Naive thymus-derived CD4-positive, alpha-beta T cell (primary cell): ENCODE measurements at regions of chr20 and their contacts with region 1.

Region 1: DNA sequence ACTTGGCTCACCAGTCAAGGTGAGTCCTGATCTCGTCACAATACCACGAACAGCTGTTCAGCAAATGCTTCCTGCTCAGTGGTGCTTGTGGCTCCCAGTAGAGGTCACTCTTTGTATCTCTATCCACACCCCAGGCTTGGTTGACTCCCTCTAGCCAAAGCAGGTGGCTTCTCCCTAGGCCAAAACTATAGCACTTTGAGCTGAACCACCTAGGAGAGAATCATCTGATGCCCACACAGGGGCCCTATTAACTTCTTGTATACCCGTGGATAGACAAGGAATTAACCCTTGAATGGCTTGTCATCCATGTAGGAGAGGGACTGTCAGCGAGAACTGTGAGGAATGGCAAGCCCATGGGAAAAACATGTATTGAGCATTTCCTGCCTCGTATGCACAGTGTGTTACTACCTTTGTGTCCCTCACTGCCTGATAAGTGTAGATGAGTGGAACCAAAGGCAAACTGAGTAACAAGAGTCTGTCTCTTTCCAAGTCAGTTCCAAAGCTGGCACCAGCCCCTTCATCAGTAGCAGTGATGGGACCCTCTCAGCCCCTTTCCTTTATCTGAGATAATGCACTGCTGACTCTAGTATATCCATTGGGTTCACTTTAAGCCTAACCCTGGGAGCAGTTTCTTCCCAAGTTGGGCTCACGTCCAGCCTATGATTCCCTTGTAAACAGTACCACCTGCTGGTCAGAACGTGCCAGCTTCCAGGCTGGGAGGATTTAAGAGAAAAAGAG is 42.5 kb downstream of the EIF2S2 start:
- DNase-seq: peak in 8 of 9 donors; percentile 30 to 64 (median 53)
- ATAC-seq: peak; percentile 90
- H3K4me3 ChIP-seq: no peak overlapping the region
- H3K4me3 Mint-ChIP-seq: no peak overlapping the region
- H3K27ac ChIP-seq: peak overlapping the region; percentile 22
- H3K27ac Mint-ChIP-seq: peak overlapping the region in 7 of 9 donors; percentile 10 to 81 (median 41)
- H3K4me1 ChIP-seq: peaks cover 5 to 12% of the 10 kb centered on the region in 2 donors
- H3K4me1 Mint-ChIP-seq: peaks cover 29 to 51% (median 38%) of the 10 kb centered on the region in 7 donors
- H3K27me3 ChIP-seq: no peaks in the 10 kb centered on the region
- H3K27me3 Mint-ChIP-seq: no peaks in the 10 kb centered on the region

Region 2: DNA sequence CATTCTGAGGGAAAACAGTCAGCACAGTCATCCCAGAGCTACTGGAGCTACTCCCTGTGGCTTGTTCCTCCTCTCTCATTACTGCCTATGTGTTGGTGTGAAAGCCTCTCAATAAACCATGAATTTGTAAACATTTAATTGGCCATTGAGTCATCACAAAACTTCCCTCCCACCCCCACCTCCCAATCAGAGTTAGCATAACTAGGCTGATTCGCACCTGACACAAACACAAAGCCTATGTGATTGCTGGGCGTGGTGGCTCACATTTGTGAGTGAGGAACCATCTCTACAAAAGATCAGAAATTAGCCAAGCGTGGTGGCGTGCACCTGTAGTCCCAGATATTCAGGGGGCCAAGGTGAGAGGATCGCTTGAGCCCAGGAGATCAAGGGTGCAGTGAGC is 608.8 kb before region 1 on chr20:
- CTCF ChIA-PET with region 1: no interaction called
- POLR2A ChIA-PET with region 1: no interaction called
- intact Hi-C with region 1: loop called in 1 of 2 experiments (anchors 1 kb)
- DNase-seq: no peak
- ATAC-seq: no peak
- H3K4me3 ChIP-seq: no peak overlapping the region
- H3K4me3 Mint-ChIP-seq: no peak overlapping the region
- H3K27ac ChIP-seq: no peak overlapping the region
- H3K27ac Mint-ChIP-seq: no peak overlapping the region
- H3K4me1 ChIP-seq: no peaks in the 10 kb centered on the region
- H3K4me1 Mint-ChIP-seq: peaks cover 0 to 4% (median 0%) of the 10 kb centered on the region in 7 donors
- H3K27me3 ChIP-seq: no peaks in the 10 kb centered on the region
- H3K27me3 Mint-ChIP-seq: no peaks in the 10 kb centered on the region

Region 3: GRCh38 chr20:33785503-33785902 is 284.0 kb before region 1 on chr20:
- CTCF ChIA-PET with region 1: no interaction called
- POLR2A ChIA-PET with region 1: no interaction called
- intact Hi-C with region 1: no loop called
- DNase-seq: no peak
- ATAC-seq: no peak
- H3K4me3 ChIP-seq: no peak overlapping the region
- H3K4me3 Mint-ChIP-seq: no peak overlapping the region
- H3K27ac ChIP-seq: no peak overlapping the region
- H3K27ac Mint-ChIP-seq: no peak overlapping the region
- H3K4me1 ChIP-seq: peaks cover 0 to 11% of the 10 kb centered on the region in 2 donors
- H3K4me1 Mint-ChIP-seq: peaks cover 0 to 18% (median 5%) of the 10 kb centered on the region in 7 donors
- H3K27me3 ChIP-seq: no peaks in the 10 kb centered on the region
- H3K27me3 Mint-ChIP-seq: no peaks in the 10 kb centered on the region

Region 4: DNA sequence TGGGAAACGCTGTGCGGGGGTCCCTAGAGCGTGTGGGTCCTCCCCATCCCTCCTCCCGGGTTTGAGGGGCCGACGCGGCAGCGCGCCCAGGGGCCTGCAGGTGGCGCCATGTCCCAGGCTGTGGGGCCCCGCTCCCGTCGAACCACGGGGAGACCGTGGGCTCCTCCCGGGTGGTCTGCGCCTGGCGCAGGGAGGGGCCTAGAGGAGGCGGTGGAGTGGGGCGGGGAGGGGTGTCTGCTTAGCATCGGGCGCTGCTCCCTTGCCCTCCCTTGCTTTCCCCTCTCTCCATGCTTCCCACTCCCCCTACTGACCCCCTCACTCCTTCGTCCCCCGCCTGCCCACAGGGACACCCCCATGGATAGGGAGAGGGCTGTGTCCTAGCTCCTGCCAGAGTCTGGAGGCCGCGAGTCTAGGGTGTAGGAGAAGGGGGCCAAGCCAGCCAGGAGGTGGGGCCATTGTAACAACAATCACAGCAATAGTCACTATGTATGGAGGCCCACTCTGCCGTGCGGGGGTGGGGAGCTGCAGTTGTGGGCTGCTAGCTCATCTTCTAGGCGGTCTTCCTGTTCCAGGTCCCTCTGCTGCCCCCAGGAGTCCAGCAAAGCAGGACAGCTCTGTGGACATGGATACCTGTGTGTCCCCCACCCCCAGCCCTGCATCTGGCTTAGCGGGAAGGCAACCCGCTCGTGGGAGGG is 206.7 kb before region 1 on chr20:
- CTCF ChIA-PET with region 1: interaction called, 11 read pairs
- POLR2A ChIA-PET with region 1: no interaction called
- intact Hi-C with region 1: loop called (anchors 1 to 2 kb)
- DNase-seq: peak in 8 of 9 donors; percentile 23 to 58 (median 43)
- ATAC-seq: peak; percentile 64
- H3K4me3 ChIP-seq: no peak overlapping the region
- H3K4me3 Mint-ChIP-seq: no peak overlapping the region
- H3K27ac ChIP-seq: no peak overlapping the region
- H3K27ac Mint-ChIP-seq: no peak overlapping the region
- H3K4me1 ChIP-seq: peaks cover 18 to 26% of the 10 kb centered on the region in 2 donors
- H3K4me1 Mint-ChIP-seq: peaks cover 18 to 31% (median 27%) of the 10 kb centered on the region in 7 donors
- H3K27me3 ChIP-seq: no peaks in the 10 kb centered on the region
- H3K27me3 Mint-ChIP-seq: peaks cover 0 to 3% (median 0%) of the 10 kb centered on the region in 5 donors

Region 5: GRCh38 chr20:33933469-33933909 is 136.0 kb before region 1 on chr20:
- CTCF ChIA-PET with region 1: interaction called, 5 read pairs
- POLR2A ChIA-PET with region 1: no interaction called
- intact Hi-C with region 1: loop called (anchors 1 kb)
- DNase-seq: peak; percentile 14 to 62 (median 48)
- ATAC-seq: peak; percentile 71
- H3K4me3 ChIP-seq: no peak overlapping the region
- H3K4me3 Mint-ChIP-seq: no peak overlapping the region
- H3K27ac ChIP-seq: peak overlapping the region; percentile 13
- H3K27ac Mint-ChIP-seq: peak overlapping the region in 1 of 9 donors; percentile 27
- H3K4me1 ChIP-seq: no peaks in the 10 kb centered on the region
- H3K4me1 Mint-ChIP-seq: peaks cover 0 to 2% (median 0%) of the 10 kb centered on the region in 7 donors
- H3K27me3 ChIP-seq: no peaks in the 10 kb centered on the region
- H3K27me3 Mint-ChIP-seq: peaks cover 0 to 3% (median 0%) of the 10 kb centered on the region in 5 donors

Region 6: DNA sequence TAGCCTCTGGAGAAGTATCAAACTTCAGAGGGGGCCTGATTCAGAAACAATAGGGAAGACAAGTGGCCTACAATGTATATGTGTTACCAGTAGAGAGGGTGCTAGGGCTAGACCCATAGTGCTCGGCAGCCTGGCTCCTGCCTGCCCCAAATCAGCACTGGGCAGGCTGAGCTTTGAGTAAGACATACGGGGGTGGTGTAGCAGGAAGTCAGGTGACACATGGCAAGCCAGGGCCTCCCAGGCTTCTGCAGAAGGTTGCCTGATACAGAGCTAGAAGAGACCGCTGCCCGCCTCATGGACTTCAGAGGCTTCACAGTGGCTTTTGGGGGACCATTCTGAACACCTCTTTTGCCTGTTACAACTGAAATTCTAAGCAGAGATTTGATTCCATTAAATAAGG is 32.4 kb before region 1 on chr20:
- CTCF ChIA-PET with region 1: no interaction called
- POLR2A ChIA-PET with region 1: no interaction called
- intact Hi-C with region 1: loop called in 1 of 2 experiments (anchors 2 kb)
- DNase-seq: peak in 8 of 9 donors; percentile 21 to 50 (median 43)
- ATAC-seq: peak; percentile 88
- H3K4me3 ChIP-seq: no peak overlapping the region
- H3K4me3 Mint-ChIP-seq: peak overlapping the region; percentile 49 to 80 (median 60)
- H3K27ac ChIP-seq: no peak overlapping the region
- H3K27ac Mint-ChIP-seq: peak overlapping the region in 8 of 9 donors; percentile 17 to 80 (median 63)
- H3K4me1 ChIP-seq: peaks cover 12 to 33% of the 10 kb centered on the region in 2 donors
- H3K4me1 Mint-ChIP-seq: peaks cover 48 to 98% (median 95%) of the 10 kb centered on the region in 7 donors
- H3K27me3 ChIP-seq: no peaks in the 10 kb centered on the region
- H3K27me3 Mint-ChIP-seq: no peaks in the 10 kb centered on the region